KBM-7 (cell line): ENCODE measurements at regions of chr5 and their contacts with region 1.

Region 1: GRCh38 chr5:174724491-174725260 is at the start of gene MSX2:
- DNase-seq: peak; percentile 93

Region 2: GRCh38 chr5:174418928-174419796 is 305.5 kb before region 1 on chr5:
- in situ Hi-C with region 1: loop called (anchors 25 kb)
- DNase-seq: peak; percentile 83

Region 3: GRCh38 chr5:174453696-174454095 is 271.0 kb before region 1 on chr5:
- in situ Hi-C with region 1: no loop called
- DNase-seq: no peak

Region 4: DNA sequence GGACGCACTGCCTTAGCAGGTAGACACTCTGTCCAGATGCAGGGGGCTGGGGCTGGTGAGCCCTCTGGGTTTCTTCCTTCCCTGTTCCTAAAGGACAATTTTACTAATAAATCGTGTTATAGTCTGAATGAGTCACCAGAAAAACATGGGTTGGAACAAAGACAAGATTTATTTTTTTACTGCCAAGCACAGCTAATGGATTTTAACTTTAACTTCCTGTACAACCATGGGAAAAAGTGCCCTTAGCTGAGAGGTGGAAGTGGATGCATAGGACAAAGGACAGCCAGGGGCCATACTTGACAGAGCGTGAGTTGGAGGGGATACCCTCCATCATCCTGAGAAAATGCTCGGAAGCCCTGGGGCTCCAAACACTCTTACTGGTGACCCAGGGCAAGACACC is 300.4 kb after region 1 on chr5:
- in situ Hi-C with region 1: no loop called
- DNase-seq: no peak